A673 (cell line): ENCODE measurements at regions of chr12 and their contacts with region 1.

Region 1: GRCh38 chr12:13436696-13437391 is 240.3 kb downstream of the EMP1 start:
- DNase-seq: peak; percentile 71
- H3K4me3 ChIP-seq: no peak overlapping the region
- H3K27ac ChIP-seq: no peak overlapping the region
- H3K4me1 ChIP-seq: peaks cover 15% of the 10 kb centered on the region
- H3K27me3 ChIP-seq: no peaks in the 10 kb centered on the region
- CTCF ChIP-seq: no peak

Region 2: DNA sequence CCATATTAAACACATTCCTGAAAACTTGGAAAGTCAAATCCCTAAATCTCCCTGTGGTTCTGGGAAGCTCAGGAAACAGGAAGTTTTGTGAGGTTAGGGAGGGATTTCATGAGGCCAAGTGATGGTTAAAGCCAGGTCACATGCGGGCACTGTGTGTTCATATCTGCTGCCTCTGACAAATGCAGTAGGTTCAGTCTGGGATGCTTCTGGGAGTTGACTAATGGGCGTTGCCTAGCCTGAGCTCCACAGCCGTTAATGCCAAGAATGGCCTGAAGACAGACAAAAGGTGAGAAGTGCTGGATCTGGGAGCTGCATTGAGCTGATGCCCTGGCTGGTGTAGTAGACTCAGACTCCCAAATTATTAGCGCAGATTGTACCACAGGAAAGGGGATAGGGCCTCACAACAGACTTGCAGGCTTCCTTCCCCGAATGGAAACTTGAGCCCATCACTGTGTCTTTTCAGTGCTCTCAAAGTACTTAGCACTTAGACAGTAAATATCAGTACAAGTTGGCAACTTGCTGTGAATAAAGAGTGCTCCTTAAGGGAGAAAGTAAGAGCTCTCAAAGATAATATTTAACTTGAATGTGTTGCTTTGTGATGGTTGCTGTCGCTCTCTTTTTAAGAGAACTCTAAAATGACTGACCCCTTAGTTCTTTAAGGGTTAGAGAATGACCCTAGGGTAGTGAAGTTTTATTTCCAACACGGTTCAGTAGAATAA is 350.7 kb before region 1 on chr12:
- CTCF ChIA-PET with region 1: no interaction called
- POLR2A ChIA-PET with region 1: no interaction called
- intact Hi-C with region 1: no loop called
- DNase-seq: no peak
- H3K4me3 ChIP-seq: no peak overlapping the region
- H3K27ac ChIP-seq: no peak overlapping the region
- H3K4me1 ChIP-seq: peaks cover 5% of the 10 kb centered on the region
- H3K27me3 ChIP-seq: no peaks in the 10 kb centered on the region
- CTCF ChIP-seq: no peak

Region 3: DNA sequence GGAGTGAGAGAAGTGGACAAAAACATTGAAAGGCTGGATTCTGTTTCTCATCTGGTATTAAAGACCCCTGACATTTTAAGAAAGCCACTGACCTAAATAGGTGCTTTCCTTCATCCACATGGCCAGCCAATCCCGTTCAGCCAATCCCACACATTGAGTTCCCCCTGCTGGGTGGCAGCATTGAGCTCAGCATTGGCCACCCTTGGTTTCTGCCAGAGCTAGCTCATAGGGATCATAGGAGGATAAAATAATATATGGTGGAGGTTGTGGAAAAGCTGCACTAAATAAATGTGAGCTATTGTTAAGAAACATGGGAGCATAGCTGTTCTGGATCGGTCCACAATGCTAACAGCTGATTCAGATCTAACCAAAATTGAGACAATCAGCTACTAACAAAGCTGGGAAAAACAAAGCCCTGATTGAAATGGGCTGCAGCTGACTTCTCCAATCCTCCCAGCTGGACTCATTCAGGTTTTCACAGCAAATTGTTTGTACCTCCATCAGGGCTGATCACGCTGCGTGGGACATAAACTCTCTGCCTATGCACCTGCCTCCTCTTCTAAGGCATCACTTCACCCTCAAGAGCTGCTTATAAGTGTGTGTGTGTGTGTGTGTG is 16.2 kb after region 1 on chr12:
- CTCF ChIA-PET with region 1: no interaction called
- POLR2A ChIA-PET with region 1: interaction called, 20 read pairs
- intact Hi-C with region 1: no loop called
- DNase-seq: no peak
- H3K4me3 ChIP-seq: no peak overlapping the region
- H3K27ac ChIP-seq: no peak overlapping the region
- H3K4me1 ChIP-seq: no peaks in the 10 kb centered on the region
- H3K27me3 ChIP-seq: no peaks in the 10 kb centered on the region
- CTCF ChIP-seq: no peak